ENCODE measurements at regions of chr2 and their contacts with region 1.

Region 1: GRCh38 chr2:153519257-153519875 is 40.8 kb upstream of the RPRM start:
- DNase-seq: peak; percentile 73
- H3K4me3 Mint-ChIP-seq: no peak overlapping the region
- H3K27ac Mint-ChIP-seq: no peak overlapping the region
- H3K4me1 Mint-ChIP-seq: no peaks in the 10 kb centered on the region
- H3K27me3 Mint-ChIP-seq: peaks cover 20% of the 10 kb centered on the region

Region 2: DNA sequence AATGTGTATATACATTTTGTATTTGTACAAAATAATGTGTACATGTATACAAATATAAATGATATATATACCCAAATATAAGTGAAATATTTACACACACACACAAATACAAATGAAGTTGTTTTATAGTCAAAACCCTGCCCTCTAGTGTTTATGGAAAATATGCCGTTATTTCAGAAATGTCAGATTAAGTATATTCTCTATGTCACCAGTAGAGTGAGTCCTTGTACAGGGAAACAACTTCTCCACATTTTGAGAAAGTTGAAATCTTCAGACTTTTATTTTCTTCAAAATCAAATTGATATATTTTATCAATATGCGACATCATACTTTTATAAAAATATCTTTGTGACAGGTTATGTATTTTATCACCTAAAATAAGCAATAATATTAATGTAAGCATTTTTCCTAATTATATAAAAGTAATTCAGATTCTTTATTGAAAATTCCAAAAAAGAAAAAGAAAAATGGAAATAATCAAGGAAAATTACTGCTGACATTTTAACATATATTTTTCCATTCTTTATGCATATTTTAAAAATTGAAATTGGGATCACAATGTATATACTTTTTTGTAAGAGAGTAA is 778.5 kb before region 1 on chr2:
- CTCF ChIA-PET with region 1: interaction called, 3 read pairs
- intact Hi-C with region 1: loop called (anchors 1 kb)
- DNase-seq: no peak
- H3K4me3 Mint-ChIP-seq: no peak overlapping the region
- H3K27ac Mint-ChIP-seq: no peak overlapping the region
- H3K4me1 Mint-ChIP-seq: no peaks in the 10 kb centered on the region
- H3K27me3 Mint-ChIP-seq: no peaks in the 10 kb centered on the region

Region 3: DNA sequence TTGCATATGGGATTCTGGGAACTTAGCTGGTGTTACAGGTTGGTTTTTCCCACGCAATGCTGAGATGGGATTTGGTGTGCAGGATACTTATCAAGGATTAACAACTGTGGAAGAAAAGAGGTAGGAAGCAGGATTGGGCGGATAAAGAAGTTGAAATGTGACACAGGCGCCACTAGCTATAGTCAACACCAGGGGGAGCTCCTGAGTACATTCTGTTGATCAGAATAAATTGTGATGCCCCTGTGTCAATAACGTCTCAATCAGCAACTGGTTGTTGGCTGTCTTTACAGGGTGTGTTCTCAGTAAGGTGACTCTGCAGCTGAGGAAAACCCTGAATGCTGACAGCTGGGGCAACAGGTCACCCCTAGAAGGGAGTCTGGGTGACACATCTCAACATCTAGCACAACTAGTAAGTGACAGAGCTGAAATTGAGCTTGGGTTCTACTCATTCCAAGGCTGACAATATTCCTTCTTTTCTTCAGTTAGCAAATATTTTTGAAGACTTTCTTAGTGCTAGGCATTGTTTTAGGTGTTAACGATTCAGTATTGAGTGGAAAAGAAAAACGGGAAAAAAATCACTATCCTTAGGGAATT is 657.9 kb before region 1 on chr2:
- CTCF ChIA-PET with region 1: no interaction called
- intact Hi-C with region 1: loop called (anchors 10 kb)
- DNase-seq: peak; percentile 18
- H3K4me3 Mint-ChIP-seq: no peak overlapping the region
- H3K27ac Mint-ChIP-seq: no peak overlapping the region
- H3K4me1 Mint-ChIP-seq: no peaks in the 10 kb centered on the region
- H3K27me3 Mint-ChIP-seq: peaks cover 8% of the 10 kb centered on the region

Region 4: DNA sequence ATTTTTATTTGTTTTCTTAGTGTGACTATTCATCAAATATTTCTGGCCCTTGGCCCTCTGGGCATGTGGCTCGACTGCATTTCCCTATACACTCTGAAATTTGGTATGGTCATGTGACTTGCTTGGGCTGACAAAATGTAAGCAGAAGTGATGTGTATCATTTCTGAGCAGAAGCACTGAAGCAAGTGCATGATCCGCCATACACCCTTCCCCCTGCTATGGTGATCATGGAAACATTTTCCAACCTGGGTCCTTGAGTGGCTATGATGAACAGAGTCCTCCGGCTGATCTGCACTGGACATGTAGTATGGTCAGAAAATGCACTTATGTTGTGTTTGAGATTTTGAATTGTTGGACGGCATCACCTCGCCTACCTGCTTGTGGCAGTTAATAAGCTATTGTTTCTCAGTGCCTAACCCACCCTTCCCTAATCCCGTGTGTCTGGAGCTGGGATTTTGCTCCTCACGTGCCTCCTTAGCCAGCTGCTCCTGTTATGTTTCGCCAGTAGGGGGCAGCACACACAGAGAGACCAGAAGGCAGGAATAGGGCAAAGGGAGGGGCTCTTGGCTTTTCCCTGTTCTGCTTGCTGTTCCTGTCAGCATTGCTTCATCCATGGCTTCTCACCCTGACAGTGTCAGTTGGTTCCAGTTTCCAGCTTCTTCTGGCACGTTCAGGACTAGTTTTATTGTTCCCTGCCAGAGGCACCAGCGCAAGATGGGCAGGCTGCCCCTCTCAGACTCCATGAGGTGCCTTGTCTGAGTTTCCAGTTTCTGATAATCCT is 593.6 kb before region 1 on chr2:
- CTCF ChIA-PET with region 1: no interaction called
- intact Hi-C with region 1: loop called (anchors 1 kb)
- DNase-seq: peak; percentile 67
- H3K4me3 Mint-ChIP-seq: no peak overlapping the region
- H3K27ac Mint-ChIP-seq: no peak overlapping the region
- H3K4me1 Mint-ChIP-seq: no peaks in the 10 kb centered on the region
- H3K27me3 Mint-ChIP-seq: peaks cover 9% of the 10 kb centered on the region

Region 5: DNA sequence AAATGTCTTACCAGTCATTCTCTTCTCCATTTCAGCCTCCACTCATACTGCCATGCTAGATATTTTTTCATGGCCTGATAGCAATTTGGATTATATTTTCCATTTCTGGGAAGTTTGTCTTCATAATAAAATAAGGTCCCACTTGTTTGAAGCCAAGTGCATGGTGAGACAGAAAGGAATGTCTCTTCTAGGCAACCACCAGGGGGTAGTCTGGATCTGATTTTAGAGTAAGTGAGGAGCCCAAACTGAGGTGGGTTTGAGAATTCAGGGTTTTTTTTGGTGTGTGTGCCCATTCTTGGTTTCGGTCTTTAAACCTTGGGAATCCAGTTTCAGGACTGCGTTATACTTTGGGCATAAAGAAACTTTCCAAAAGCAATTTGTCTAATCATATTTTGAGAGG is 356.3 kb before region 1 on chr2:
- CTCF ChIA-PET with region 1: no interaction called
- intact Hi-C with region 1: loop called (anchors 1 kb)
- DNase-seq: no peak
- H3K4me3 Mint-ChIP-seq: no peak overlapping the region
- H3K27ac Mint-ChIP-seq: no peak overlapping the region
- H3K4me1 Mint-ChIP-seq: no peaks in the 10 kb centered on the region
- H3K27me3 Mint-ChIP-seq: peaks cover 3% of the 10 kb centered on the region

Region 6: DNA sequence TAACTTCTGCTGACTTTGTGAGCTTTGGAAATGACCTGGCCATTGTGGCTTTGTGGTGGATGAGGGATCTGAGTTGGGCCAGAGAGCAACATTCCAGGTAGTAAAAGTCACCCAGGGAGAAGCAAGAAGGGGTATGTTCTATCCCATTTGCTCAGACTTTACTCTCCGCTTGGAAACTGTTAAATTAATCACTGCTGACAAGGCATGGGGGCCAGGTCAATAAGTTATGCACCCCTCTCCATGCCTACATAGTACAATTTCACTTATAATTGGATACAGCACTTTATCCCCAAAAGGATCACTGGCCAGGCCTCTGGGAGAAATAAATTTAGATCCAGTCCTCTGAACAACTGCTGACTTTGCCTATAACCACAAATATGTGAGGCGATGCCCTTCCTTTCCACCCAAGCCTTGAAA is 132.9 kb before region 1 on chr2:
- CTCF ChIA-PET with region 1: no interaction called
- intact Hi-C with region 1: no loop called
- DNase-seq: no peak
- H3K4me3 Mint-ChIP-seq: no peak overlapping the region
- H3K27ac Mint-ChIP-seq: no peak overlapping the region
- H3K4me1 Mint-ChIP-seq: no peaks in the 10 kb centered on the region
- H3K27me3 Mint-ChIP-seq: peaks cover 3% of the 10 kb centered on the region

Region 7: GRCh38 chr2:153478334-153479261 is 40.8 kb before region 1 on chr2 and contains the start of gene RPRM:
- CTCF ChIA-PET with region 1: no interaction called
- intact Hi-C with region 1: loop called (anchors 1 kb)
- DNase-seq: peak; percentile 55
- H3K4me3 Mint-ChIP-seq: peak within 1 kb of the TSS; percentile 52
- H3K27ac Mint-ChIP-seq: no peak within 1 kb of the TSS
- H3K4me1 Mint-ChIP-seq: peaks cover 15% of the 10 kb centered on the region
- H3K27me3 Mint-ChIP-seq: peaks cover 56% of the 10 kb centered on the region
- total RNA-seq, gene RPRM: not detected

Measured in activated naive CD4-positive, alpha-beta T cell treated with anti-CD3 and anti-CD28 coated beads for 36 hours (primary cell).